ENCODE measurements at regions of chr17 and their contacts with region 1.

Region 1: GRCh38 chr17:32593003-32593402 is 106.2 kb downstream of the CDK5R1 start:
- DNase-seq: no peak

Region 2: DNA sequence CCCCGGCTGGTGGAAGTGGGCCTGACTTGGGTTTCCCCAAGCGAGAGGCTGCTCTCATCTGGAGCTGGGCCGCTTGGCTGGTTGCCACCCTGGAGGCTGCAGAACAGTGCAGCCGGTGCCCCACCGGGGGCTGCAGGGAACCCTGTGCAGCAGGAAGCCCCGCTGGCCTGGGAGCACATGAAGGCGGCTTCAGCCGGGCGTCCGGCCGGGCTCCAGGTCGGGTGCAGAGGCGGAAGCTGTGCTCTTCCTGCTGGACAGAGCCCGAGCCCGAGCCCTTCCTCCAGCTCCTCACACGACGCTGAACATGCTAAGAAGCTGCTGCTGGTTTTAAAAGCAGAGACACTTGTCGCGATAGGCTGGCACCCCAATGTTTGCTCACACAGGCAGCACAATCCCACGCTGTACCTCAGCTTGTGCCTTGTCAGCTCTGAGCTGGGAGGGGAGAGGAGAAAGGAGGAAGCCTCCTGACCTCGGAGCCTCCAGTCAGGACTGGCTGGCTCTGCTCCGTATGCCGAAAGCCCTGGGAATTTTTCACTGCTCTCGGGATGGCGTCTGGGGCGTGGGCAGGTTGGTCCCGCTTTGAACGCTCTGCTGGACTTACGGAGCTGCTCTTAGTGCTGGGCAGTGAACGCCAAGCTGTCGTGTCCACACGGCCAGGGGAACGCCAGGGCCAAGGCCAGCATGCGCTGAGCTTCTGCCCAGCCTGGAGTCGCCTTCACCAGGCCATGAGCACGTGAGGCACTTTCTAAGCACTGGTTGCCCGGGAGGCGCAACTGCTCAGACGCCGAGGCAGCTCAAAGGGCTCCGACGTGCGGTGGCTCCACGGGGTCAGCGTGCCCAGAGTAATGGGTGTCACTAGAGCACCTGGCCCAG is 97.4 kb before region 1 on chr17:
- in situ Hi-C with region 1: no loop called
- DNase-seq: peak; percentile 84

Region 3: DNA sequence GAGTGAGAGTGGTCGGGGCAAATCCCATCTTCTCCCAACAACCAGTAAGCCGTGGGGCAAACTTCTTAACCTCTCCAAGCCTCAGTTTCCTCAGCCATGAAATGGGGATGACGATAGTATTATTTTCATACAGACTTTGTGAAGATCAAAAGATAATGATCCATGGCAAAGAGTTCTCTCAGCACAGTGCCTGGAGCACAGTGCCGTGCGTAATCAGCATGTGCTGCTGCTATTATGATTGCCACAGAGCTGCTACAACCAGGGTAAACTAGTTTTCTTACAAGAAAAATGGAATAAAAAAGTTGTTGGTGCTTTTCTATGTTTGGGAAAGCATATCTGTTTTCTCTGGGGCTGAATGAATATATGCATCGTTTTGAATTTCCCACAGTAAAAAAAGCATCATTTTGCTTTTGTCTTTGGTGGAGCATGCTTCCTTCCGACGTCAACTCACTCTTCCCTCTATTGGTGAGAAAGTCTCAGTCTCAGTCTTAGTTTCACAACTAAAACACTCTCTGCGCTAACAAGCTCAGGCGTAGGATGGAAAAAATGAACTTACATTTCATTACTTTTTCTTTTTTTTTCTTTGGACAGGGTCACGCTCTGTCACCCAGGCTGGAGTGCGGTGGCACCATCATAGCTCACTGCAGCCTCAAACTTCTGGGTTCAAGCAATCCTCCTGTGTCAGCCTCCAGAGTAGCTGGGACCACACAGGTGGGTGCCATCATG is 69.0 kb before region 1 on chr17:
- in situ Hi-C with region 1: no loop called
- DNase-seq: no peak

Region 4: DNA sequence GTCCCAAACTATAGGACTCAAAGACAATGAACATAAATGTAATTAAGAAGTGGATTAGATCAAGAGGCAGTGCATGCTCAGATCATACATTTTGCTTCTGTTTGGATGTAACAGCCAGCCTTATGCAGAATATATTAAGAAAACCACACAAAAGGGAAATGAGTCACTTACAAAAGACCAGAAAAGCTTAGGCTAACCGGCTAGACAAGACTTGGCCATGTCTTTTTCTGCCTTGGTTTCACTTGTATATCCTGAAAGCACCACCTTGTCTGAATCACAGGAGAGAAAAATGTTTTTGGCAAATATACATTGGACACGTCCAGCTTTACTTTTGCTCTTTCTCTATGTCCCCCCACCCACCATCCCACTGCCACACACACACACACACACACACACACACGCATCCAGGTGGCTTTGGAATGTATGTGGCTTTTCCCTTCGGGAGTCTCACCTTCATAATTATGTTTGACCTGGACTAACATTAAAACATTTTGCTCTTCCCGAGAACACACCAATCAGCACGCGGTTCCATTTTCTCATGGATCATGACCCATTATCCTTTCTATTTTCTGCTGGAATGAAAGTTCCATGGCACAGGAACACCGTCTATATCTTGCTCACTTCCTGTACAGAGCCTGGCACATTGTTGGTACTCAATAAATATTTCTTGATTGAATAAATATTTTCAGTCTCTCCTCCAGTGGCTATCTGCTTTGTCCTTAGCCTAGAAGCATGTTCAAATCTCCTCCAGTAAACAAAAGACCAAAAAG is 41.6 kb before region 1 on chr17:
- in situ Hi-C with region 1: loop called (anchors 5 kb)
- DNase-seq: no peak